ENCODE measurements at regions of chr17 and their contacts with region 1.

Region 1: DNA sequence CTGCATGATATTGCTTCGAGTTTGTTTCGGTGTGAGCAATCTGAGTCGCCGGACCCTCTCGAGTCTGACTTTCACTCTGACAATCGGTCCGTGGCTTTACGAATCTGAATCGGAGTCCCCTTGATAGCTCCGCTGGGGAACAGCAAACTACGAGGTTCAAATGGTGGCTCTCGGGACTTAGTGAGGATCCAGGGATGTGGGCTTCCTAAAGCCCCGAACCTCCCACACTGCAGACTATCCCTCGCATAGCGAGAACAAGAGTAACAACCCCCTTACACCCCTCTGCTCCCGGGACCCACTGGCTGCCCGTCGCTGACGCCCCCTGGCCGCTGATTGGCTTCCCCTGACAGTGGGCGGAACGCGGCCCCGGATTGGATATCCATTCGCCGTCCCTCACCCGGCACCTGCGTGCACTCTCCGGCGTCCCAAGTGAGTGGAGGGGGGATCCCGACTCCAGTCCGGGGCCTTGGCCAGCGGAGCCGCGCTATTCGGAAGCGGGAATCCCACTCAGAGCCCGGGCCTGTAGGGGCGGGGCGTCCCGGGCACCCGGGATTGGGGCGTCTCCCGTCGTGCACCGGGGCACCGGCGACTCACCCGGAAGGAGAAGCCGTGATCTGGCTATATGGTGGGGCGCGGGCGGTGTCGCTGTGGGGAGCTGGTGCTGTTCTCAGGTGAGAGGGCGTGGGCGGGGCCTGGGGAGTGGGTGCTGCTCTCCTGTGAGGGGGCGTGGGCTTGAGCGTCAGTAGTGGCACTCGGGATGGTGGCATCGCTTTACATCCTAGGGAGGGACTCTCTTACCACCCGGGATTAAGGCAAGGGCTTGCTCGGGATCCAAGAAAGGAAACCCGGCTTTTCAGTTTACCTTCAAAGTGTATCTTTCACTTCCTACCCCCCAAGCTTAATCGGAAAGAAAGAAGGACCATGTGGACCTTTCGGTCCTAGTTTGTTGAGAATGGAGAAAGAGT is at the start of gene SNX11:
- DNase-seq: peak in 1 of 2 donors; percentile 91
- H3K4me3 ChIP-seq: peak within 1 kb of the TSS; percentile 80 to 96
- H3K27ac ChIP-seq: peak within 1 kb of the TSS; percentile 84
- H3K4me1 ChIP-seq: peaks cover 38% of the 10 kb centered on the region
- H3K27me3 ChIP-seq: no peaks in the 10 kb centered on the region
- CTCF ChIP-seq: peak in 1 of 3 experiments; percentile 24
- POLR2A ChIP-seq: peak in 1 of 2 donors; percentile 11
- total RNA-seq, gene SNX11: 15.0 TPM

Region 2: GRCh38 chr17:47649153-47649971 is 458.1 kb before region 1 on chr17 and contains the start of gene KPNB1:
- intact Hi-C with region 1: no loop called
- DNase-seq: peak; percentile 98 to 100
- H3K4me3 ChIP-seq: peak within 1 kb of the TSS; percentile 85 to 98
- H3K27ac ChIP-seq: peak within 1 kb of the TSS; percentile 94
- H3K4me1 ChIP-seq: peaks cover 40% of the 10 kb centered on the region
- H3K27me3 ChIP-seq: no peaks in the 10 kb centered on the region
- CTCF ChIP-seq: peak in 1 of 3 experiments; percentile 8
- POLR2A ChIP-seq: peak in 1 of 2 donors; percentile 24
- total RNA-seq, gene KPNB1: 157 TPM

Region 3: DNA sequence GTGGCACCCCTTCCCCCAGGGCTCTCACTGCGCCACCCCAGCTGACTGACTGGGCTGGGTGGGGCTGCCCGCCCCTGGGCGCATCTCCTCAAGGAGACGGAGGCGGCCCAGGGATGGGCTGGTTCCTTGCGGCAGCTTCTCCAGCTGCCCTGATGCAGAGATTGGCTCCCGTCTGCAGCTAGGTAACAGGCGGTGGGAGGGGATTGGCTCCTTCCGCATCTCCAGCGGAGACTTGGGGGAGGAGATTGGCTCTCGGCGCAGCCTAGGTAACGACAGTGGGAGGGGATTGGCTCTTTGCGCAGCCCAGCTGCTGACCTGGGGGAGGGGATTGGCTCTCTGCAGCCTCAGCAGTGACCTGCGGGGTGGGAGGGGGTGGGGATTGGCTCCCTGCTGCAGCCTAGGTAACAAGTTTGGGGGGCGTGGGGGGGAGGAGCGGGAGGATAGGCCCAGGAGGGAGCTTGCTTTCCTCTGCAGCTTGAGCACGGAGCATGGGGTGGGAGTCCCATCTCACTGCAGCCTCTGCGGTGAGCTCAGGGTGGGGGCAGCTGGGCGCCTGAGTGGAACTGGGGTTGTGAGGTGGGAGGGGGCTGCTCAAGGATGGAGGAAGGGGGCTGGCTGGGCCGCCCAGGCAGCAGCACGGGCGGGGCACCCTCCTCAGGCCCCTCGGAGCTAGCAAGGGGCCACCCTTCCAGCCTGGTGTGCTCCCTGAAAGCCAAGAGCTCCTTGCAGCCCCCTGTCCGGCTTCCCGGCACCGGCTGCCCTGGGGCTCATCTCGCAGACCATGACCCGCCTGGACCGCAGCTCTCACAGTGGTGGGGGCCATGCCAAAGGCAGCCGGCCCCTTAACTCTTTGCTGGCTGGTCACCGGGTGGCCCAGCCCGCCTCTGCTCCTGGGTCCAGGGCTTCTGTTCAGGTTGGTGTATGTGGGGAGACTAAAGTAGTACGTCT is 52.9 kb before region 1 on chr17:
- intact Hi-C with region 1: loop called (anchors 5 kb)
- DNase-seq: no peak
- H3K4me3 ChIP-seq: peak overlapping the region; percentile 80 to 87
- H3K27ac ChIP-seq: peak overlapping the region; percentile 99
- H3K4me1 ChIP-seq: peaks cover 76% of the 10 kb centered on the region
- H3K27me3 ChIP-seq: no peaks in the 10 kb centered on the region
- CTCF ChIP-seq: no peak
- POLR2A ChIP-seq: no peak

Measured in vagina (tissue), 2 donors.